Activated B cell treated with CpG ODN at 0.5 μM for 24 hours (primary cell): ENCODE measurements at regions of chr14 and their contacts with region 1.

Region 1: GRCh38 chr14:35301735-35302528 is 9.8 kb downstream of the PSMA6 start:
- DNase-seq: no peak
- ATAC-seq: no peak
- H3K4me3 Mint-ChIP-seq: no peak overlapping the region
- H3K27ac Mint-ChIP-seq: no peak overlapping the region
- H3K4me1 Mint-ChIP-seq: peaks cover 41% of the 10 kb centered on the region
- H3K27me3 Mint-ChIP-seq: no peaks in the 10 kb centered on the region
- CTCF ChIP-seq: no peak

Region 2: GRCh38 chr14:35068238-35069012 is 233.5 kb before region 1 on chr14:
- CTCF ChIA-PET with region 1: no interaction called
- POLR2A ChIA-PET with region 1: interaction called, 11 read pairs
- intact Hi-C with region 1: no loop called
- DNase-seq: no peak
- ATAC-seq: no peak
- H3K4me3 Mint-ChIP-seq: no peak overlapping the region
- H3K27ac Mint-ChIP-seq: no peak overlapping the region
- H3K4me1 Mint-ChIP-seq: no peaks in the 10 kb centered on the region
- H3K27me3 Mint-ChIP-seq: no peaks in the 10 kb centered on the region
- CTCF ChIP-seq: no peak

Region 3: DNA sequence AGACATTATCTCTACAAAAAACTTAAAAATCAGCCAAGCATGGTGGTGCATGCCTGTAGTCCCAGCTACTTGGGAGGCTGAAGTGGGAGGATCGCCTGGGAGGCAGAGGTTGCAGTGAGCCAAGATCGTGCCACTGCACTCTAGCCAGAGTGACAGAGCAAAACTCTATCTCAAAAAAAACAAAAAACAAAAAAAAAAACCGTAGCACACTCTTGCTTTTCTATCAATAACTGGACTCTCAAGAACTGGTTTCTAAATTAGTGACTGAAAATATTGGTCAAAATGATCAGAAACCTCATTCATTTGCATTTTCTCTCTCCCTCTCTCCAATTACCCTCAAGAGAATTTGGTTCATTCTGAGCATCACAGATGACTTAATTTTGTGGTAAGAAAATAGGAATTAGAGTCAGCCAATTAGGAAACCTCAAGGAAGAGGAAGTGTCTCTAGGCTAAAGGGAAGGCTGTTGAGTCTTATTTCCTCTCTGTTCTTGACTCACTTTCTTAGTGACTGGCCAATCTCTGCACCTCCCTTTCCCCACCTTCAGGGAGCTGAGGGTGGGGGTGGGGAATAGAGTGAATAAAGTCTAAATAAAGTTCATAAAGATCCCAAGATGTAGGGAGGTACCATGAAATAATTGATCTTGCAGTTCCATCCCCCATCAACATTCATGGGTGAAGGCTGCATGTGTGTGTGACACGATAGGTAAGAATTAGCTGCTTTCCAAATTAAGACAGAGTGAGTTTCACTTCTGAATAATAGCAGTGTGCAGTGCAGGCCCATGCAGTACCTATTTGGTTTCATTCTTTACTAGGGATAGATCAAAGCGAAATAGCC is 16.5 kb before region 1 on chr14:
- CTCF ChIA-PET with region 1: no interaction called
- POLR2A ChIA-PET with region 1: interaction called, 6 read pairs
- intact Hi-C with region 1: loop called (anchors 2 kb)
- DNase-seq: no peak
- ATAC-seq: peak; percentile 81
- H3K4me3 Mint-ChIP-seq: peak overlapping the region; percentile 80
- H3K27ac Mint-ChIP-seq: peak overlapping the region; percentile 90
- H3K4me1 Mint-ChIP-seq: peaks cover 52% of the 10 kb centered on the region
- H3K27me3 Mint-ChIP-seq: no peaks in the 10 kb centered on the region
- CTCF ChIP-seq: no peak

Region 4: DNA sequence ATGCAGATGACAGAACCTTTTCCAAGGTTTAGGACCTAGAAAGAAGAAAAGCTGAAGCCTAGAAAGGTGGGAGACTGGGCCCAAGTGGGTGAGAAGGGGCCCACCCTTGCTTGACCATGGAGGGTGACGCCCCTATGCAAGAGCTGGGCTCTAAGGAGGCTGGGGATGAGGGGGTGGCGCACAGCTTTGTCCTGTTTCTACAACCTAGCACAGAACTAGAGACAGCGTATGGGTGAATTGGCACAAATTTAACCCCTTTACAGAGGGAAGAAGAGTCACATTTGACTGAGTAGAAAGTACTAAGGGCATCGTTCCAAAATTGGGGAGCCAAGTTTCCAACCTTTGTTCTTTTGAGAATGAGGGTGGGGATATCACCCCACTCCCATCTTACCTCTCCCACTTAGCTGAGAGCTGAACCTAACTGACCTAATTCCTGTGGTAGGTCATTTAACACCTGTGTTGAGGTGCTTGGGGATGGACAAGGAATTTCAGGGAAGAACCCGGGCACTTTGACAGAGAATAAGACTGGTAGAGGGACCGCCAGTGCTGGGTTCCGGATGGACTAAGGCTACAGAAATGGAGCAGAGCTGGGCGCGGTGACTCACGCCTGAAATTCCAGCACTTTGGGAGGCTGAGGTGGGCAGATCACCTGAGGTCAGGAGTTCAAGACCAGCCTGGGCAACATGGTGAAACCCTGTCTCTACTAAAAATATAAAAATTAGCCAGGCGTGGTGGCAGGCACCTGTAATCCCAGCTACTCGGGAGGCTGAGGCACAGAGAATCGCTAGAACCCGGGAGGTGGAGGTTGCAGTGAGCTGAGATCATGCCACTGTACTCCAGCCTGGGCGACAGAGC is 97.4 kb after region 1 on chr14:
- CTCF ChIA-PET with region 1: interaction called, 3 read pairs
- POLR2A ChIA-PET with region 1: interaction called, 14 read pairs
- intact Hi-C with region 1: no loop called
- DNase-seq: no peak
- ATAC-seq: no peak
- H3K4me3 Mint-ChIP-seq: peak overlapping the region; percentile 61
- H3K27ac Mint-ChIP-seq: peak overlapping the region; percentile 84
- H3K4me1 Mint-ChIP-seq: peaks cover 59% of the 10 kb centered on the region
- H3K27me3 Mint-ChIP-seq: no peaks in the 10 kb centered on the region
- CTCF ChIP-seq: no peak